Activated T-helper 1 cell treated with anti-CD3 and anti-CD28 coated beads, Interleukin-12 subunit alpha, Interleukin-12 subunit beta, Interleukin-2, Interleukin-4 antibody, amounts not matched to agents 30 ng/mL and 10 ng/mL and 1 ng/mL, durations not matched to agents 14 hours and 24 hours and 36 hours (primary cell): ENCODE measurements at regions of chr17 and their contacts with region 1.

Region 1: GRCh38 chr17:44006598-44007345 is 2.4 kb downstream of the NAGS start:
- DNase-seq: peak; percentile 86
- H3K4me3 Mint-ChIP-seq: peak overlapping the region; percentile 81
- H3K27ac Mint-ChIP-seq: peak overlapping the region; percentile 70
- H3K4me1 Mint-ChIP-seq: peaks cover 23% of the 10 kb centered on the region
- H3K27me3 Mint-ChIP-seq: peaks cover 20% of the 10 kb centered on the region

Region 2: GRCh38 chr17:43388359-43389045 is 618.3 kb before region 1 on chr17:
- intact Hi-C with region 1: loop called (anchors 5 kb)
- DNase-seq: peak; percentile 89
- H3K4me3 Mint-ChIP-seq: peak overlapping the region; percentile 89
- H3K27ac Mint-ChIP-seq: peak overlapping the region; percentile 93
- H3K4me1 Mint-ChIP-seq: peaks cover 26% of the 10 kb centered on the region
- H3K27me3 Mint-ChIP-seq: peaks cover 4% of the 10 kb centered on the region

Region 3: GRCh38 chr17:43814714-43815113 is 192.1 kb before region 1 on chr17:
- intact Hi-C with region 1: no loop called
- DNase-seq: no peak
- H3K4me3 Mint-ChIP-seq: no peak overlapping the region
- H3K27ac Mint-ChIP-seq: no peak overlapping the region
- H3K4me1 Mint-ChIP-seq: no peaks in the 10 kb centered on the region
- H3K27me3 Mint-ChIP-seq: peaks cover 17% of the 10 kb centered on the region

Region 4: DNA sequence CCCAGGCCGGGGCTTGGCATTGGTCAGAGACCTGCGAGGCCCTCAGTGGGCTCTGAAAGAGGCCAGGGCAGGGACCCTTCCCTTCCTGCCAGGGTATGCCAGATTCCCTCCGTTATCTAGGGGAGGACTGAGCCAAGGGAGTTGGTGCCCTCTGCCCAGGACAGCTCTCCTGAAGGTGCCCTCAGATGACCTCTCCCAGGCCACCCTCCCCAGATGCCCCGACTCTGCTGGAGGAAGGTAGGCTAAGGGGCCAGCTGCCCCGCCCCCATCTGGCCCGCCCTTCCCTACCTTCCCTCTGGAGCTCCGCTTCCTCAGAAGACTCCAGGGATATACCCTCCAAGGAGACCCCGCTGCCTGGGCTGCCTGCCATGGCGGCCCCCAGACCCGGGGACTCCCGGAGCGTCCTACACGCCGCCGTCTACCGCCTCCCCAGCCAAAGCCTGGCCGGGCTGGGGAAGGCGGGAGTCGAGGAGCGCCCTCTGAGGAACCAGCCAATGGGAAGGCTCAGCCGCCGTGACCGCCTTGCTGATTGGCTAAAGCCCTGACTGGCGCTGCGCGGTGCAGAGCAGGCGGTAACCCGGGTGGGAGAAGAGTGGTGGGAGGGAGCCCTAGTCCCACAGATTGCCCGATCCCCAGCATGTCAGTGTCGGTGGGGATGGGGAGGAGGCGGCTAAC is 106.5 kb before region 1 on chr17:
- intact Hi-C with region 1: loop called (anchors 5 kb)
- DNase-seq: peak; percentile 83
- H3K4me3 Mint-ChIP-seq: peak overlapping the region; percentile 73
- H3K27ac Mint-ChIP-seq: no peak overlapping the region
- H3K4me1 Mint-ChIP-seq: peaks cover 9% of the 10 kb centered on the region
- H3K27me3 Mint-ChIP-seq: peaks cover 28% of the 10 kb centered on the region

Region 5: DNA sequence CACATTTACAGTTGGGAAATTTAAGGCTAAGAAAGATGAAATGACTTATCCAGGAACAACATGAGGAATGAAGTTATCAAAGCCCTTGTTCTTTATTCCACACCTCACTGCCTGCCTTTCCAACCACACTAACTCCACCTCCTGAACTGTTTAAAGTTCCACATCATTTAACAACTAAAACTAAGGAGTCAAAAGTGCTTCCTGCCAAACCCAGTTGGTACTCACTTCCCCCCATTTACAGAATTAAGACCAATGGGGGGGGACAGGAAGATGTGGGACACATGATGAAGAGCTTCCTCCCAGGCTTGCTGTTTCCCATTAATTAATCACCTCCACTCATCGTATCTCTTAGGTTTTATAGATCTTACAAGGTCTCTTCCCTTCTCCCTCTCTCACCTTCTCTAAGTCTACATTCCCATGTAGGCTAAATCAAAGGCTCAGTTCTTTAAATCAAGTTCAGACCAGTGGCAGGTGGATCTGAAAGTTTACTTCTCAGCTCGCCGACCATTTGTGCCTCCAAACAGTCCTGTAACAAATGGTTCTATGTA is 27.2 kb after region 1 on chr17:
- intact Hi-C with region 1: no loop called
- DNase-seq: no peak
- H3K4me3 Mint-ChIP-seq: no peak overlapping the region
- H3K27ac Mint-ChIP-seq: peak overlapping the region; percentile 74
- H3K4me1 Mint-ChIP-seq: peaks cover 18% of the 10 kb centered on the region
- H3K27me3 Mint-ChIP-seq: no peaks in the 10 kb centered on the region

Region 6: GRCh38 chr17:44123356-44124117 is 116.8 kb after region 1 on chr17 and contains the start of gene HDAC5:
- intact Hi-C with region 1: loop called (anchors 2 kb)
- DNase-seq: peak; percentile 92
- H3K4me3 Mint-ChIP-seq: peak within 1 kb of the TSS; percentile 91
- H3K27ac Mint-ChIP-seq: peak within 1 kb of the TSS; percentile 96
- H3K4me1 Mint-ChIP-seq: peaks cover 25% of the 10 kb centered on the region
- H3K27me3 Mint-ChIP-seq: peaks cover 12% of the 10 kb centered on the region
- total RNA-seq, gene HDAC5: 20.6 and 22.8 TPM in 2 replicates

Region 7: DNA sequence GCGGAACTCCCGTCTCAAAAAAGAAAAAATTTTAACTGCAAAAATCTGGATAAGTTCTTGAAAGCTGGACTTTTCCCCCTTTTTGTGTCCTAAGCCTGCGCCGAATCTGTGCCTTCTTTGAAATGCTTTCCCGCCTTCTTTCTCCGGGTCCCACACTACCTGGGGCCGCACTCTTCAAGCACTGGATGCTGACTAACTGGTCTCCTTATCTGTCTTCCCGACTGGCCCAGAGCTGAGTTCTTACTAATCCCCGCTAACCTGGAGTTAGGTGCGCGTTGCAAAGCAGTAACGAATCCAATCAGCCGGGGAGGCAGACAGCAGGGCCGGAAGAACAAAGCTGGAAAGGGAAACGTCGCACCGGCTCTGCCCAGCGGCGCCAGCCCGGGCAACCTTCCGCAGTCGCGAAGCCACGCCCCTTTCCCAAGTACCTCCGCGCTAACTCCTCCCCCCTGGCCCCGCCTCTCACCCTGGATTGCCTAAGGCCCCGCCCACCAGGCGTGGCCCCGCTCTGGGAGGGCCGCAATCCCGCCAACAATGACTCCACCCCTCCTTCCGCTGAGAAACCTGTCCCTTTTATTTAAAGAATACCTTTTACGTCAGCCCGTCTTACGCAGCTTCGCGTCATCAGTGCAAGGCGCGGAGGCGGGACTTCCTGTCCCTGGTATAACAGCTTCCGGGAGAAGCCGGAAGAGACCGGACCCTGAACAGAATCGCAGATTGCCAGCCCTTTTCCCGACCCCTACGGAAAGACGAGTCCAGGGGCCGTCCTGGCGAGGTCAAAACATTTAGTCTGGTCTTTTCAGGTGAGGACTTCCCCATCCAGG is 179.7 kb after region 1 on chr17 and contains the start of gene TMUB2:
- intact Hi-C with region 1: loop called (anchors 2 kb)
- DNase-seq: peak; percentile 99
- H3K4me3 Mint-ChIP-seq: peak within 1 kb of the TSS; percentile 100
- H3K27ac Mint-ChIP-seq: peak within 1 kb of the TSS; percentile 99
- H3K4me1 Mint-ChIP-seq: peaks cover 31% of the 10 kb centered on the region
- H3K27me3 Mint-ChIP-seq: no peaks in the 10 kb centered on the region
- total RNA-seq, gene TMUB2: 17.3 and 18.7 TPM in 2 replicates

Region 8: DNA sequence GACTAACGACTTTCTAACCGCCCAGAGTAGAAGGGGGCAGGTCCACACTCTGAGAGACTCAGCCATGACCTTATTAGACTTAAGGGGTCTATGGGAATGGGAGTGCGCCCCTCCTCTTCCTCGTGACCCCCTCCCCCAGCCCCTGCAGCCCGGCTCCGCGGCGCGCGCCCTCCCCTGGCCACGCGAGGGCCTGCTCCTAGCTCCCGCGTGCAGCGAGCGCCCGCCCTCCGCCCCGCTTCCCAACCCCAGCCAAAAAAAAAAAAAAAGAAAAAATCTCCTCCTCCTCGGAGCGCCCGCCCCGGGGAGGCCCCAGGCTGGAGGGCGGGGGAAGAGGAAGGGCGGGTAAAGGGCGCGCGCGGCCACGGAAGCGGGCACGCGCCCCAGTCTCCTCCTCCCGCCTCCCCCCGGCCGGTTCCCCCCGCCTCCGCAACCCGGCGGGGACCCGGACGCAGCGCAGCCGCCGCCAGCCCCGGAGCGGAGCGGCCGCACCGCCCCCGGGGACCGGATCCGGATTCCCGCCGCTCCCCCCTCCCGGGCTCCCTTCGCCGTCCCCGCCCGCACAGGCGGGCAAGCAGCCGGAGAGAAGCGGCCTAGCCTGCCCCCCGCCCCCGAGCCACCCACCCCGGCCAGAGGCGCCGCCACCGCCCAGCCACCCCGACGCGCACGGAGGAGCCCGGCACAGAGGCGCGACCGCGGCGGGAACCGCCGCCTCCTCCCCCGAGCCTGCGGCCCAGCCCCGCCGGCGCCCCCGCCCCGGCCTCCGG is 211.8 kb after region 1 on chr17:
- intact Hi-C with region 1: no loop called
- DNase-seq: peak; percentile 86
- H3K4me3 Mint-ChIP-seq: peak overlapping the region; percentile 98
- H3K27ac Mint-ChIP-seq: peak overlapping the region; percentile 96
- H3K4me1 Mint-ChIP-seq: peaks cover 45% of the 10 kb centered on the region
- H3K27me3 Mint-ChIP-seq: no peaks in the 10 kb centered on the region

Region 9: GRCh38 chr17:44308320-44308818 is 301.6 kb after region 1 on chr17 and contains the start of gene RUNDC3A:
- intact Hi-C with region 1: loop called (anchors 5 kb)
- DNase-seq: peak; percentile 79
- H3K4me3 Mint-ChIP-seq: peak within 1 kb of the TSS; percentile 57
- H3K27ac Mint-ChIP-seq: no peak within 1 kb of the TSS
- H3K4me1 Mint-ChIP-seq: no peaks in the 10 kb centered on the region
- H3K27me3 Mint-ChIP-seq: peaks cover 28% of the 10 kb centered on the region
- total RNA-seq, gene RUNDC3A: 0.13 and 0.22 TPM in 2 replicates

Region 10: GRCh38 chr17:44556832-44557606 is 550.2 kb after region 1 on chr17 and contains the start of gene FZD2:
- intact Hi-C with region 1: loop called (anchors 2 kb)
- DNase-seq: peak; percentile 18
- H3K4me3 Mint-ChIP-seq: peak within 1 kb of the TSS; percentile 87
- H3K27ac Mint-ChIP-seq: peak within 1 kb of the TSS; percentile 63
- H3K4me1 Mint-ChIP-seq: peaks cover 11% of the 10 kb centered on the region
- H3K27me3 Mint-ChIP-seq: peaks cover 67% of the 10 kb centered on the region
- total RNA-seq, gene FZD2: not detected in 2 replicates